ENCODE measurements at regions of chr6 and their contacts with region 1.

Region 1: DNA sequence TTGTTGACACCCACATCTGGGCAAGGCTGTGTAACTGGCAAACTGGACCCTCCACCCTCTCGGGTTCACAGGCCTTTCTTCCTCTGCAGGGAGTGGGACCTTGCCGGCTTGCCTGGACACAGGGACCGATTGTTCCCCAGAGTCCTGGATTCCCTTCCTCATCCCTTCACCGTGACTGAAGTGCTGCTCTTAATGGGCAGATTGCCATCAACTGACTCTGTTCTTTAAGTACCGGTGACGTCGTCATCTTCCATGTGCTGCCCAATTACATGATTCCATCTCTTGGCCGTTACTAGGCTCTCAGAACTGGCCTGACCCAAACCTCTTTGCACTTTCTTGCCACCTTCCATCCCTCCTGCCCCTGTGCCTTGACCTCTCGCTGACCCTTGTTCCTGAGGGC is 85.4 kb downstream of the EYA4 start:
- H3K4me3 ChIP-seq: no peak overlapping the region
- H3K27ac ChIP-seq: no peak overlapping the region
- H3K4me1 ChIP-seq: peaks cover 38% of the 10 kb centered on the region
- CTCF ChIP-seq: no peak

Region 2: DNA sequence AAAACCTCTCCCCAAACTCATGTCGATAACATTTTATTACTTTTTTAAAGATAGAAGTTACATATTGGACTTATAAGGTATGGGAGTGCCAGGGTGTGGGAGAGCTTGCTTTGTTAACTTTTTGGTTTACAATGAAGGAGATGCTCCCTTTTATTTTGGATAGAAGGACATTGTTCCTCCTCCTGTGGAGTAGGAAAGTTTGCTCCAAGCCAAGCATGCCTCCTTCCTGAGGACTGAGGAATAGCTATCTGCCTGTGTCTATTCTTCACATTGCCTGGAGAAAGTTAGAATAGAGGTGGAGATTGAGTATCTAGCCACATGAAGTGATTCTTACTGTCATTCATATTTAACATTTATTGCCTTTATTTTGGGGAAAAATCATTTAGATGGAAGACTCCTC is 13.5 kb before region 1 on chr6:
- CTCF ChIA-PET with region 1: interaction called, 11 read pairs
- POLR2A ChIA-PET with region 1: no interaction called
- H3K4me3 ChIP-seq: no peak overlapping the region
- H3K27ac ChIP-seq: no peak overlapping the region
- H3K4me1 ChIP-seq: peaks cover 8% of the 10 kb centered on the region; the same call in 1 of the 2 replicates
- CTCF ChIP-seq: no peak